ENCODE measurements at regions of chr2 and their contacts with region 1.

Region 1: DNA sequence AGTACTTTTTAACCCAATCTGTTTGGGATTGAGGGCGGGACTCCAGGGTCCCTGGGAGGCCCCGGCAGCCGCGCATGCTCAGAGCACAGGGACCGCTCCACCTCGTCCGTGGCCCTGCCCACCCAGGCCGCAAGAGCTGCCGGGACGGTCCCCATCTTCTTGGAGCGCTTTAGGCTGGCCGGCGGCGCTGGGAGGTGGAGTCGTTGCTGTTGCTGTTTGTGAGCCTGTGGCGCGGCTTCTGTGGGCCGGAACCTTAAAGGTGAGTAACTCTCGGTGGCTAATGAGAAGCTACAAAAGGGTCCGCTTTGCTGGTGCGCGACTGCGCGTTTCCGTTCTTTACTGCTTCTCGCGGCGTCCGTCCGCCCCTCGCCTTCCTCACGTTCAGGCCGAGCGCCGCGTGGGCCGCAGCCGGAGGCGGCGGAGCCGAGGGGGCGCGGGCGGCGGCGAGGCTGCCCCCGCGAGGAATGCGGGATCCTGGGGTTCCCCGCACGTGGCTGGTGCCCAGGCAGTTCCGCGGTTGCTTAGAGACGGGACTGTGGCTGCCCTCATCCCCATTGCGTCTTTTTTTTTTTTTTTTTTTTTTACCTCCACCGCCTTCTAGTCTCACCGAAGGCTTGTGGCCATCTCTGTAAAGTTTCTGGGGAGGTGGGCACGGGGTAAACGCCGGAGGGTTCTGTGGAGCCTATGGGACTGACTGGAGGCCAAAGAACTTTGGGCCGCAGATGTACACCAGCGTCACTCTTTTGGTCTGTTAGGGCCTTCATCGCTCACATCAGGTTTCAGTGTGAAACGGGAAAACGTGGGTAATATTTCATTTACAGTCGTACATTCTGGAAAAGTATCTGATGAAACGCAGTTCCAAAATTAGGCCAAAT is at the start of gene SSB:
- DNase-seq: peak; percentile 95
- ATAC-seq: peak; percentile 100
- total RNA-seq, gene SSB: 52.7 TPM

Region 2: DNA sequence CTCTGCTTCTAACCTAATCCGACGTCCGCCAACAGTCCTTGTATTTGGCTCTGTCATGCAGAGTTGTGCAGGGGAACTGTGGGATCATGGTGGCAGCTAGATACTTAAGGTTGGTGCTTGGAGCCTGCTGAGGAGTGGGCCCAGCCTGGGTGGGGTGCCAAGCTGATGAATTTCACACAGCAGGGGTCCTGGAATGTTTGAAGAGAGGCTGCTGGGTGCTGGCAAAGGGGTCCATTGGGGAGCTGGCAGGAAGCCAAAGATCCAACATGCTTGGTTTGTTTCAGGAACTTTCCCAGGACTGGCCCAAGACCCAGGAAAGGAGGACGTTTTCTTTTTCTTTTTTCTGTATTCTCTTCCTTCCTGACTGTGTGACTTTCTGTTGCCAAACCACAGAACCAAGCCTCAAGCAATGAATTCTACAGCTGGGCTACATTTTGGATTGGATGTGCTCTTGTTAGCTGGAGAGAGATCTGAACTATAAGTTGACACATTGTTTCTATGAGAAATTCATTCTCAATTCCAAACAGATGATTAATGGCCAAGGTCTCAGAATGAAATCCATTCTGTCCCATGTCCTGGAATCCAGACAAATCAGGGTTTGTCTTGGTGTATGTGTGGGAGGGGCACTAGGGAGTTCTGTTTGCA is 679.7 kb before region 1 on chr2:
- intact Hi-C with region 1: no loop called
- DNase-seq: no peak
- ATAC-seq: no peak

Region 3: GRCh38 chr2:169528271-169528701 is 270.7 kb before region 1 on chr2:
- intact Hi-C with region 1: loop called (anchors 10 kb)
- DNase-seq: peak; percentile 75
- ATAC-seq: peak; percentile 59

Measured in Right ventricle myocardium inferior (tissue), 1 donor.